ENCODE measurements at regions of chr6 and their contacts with region 1.

Region 1: GRCh38 chr6:134174672-134175198 is 122.3 kb upstream of the SLC2A12 start:
- DNase-seq: peak; percentile 86
- ATAC-seq: peak; percentile 72
- H3K4me3 ChIP-seq: peak overlapping the region; percentile 95
- H3K27ac ChIP-seq: peak overlapping the region; percentile 87
- H3K4me1 ChIP-seq: peaks cover 7% of the 10 kb centered on the region; the same call in 1 of the 2 replicates
- H3K27me3 ChIP-seq: no peaks in the 10 kb centered on the region
- CTCF ChIP-seq: no peak

Region 2: GRCh38 chr6:134105924-134106323 is 68.8 kb before region 1 on chr6:
- CTCF ChIA-PET with region 1: no interaction called
- POLR2A ChIA-PET with region 1: no interaction called
- intact Hi-C with region 1: no loop called
- DNase-seq: no peak
- ATAC-seq: no peak
- H3K4me3 ChIP-seq: no peak overlapping the region
- H3K27ac ChIP-seq: no peak overlapping the region
- H3K4me1 ChIP-seq: peaks cover 14% of the 10 kb centered on the region
- H3K27me3 ChIP-seq: no peaks in the 10 kb centered on the region
- CTCF ChIP-seq: no peak

Region 3: DNA sequence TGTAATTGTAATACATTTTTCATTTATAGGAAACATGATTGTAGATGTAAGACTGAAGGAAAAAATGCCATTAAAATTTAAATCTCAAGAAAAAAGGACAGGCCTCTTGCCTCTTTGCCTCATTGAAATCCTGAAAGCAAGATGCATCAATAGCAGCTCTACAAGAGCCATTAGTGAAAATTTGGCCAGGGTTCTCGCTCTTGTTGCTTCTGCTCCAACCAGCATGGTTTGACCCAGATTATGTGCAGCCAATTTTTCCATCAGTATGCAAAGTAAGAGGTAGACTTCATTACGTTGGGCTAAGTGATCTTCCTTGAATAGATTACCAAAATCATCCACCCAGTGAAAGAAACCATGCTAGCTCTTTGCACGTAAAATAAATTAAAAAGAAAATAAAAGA is 36.6 kb after region 1 on chr6:
- CTCF ChIA-PET with region 1: no interaction called
- POLR2A ChIA-PET with region 1: no interaction called
- intact Hi-C with region 1: no loop called
- DNase-seq: no peak
- ATAC-seq: no peak
- H3K4me3 ChIP-seq: no peak overlapping the region
- H3K27ac ChIP-seq: no peak overlapping the region
- H3K4me1 ChIP-seq: no peaks in the 10 kb centered on the region
- H3K27me3 ChIP-seq: no peaks in the 10 kb centered on the region
- CTCF ChIP-seq: no peak

Region 4: DNA sequence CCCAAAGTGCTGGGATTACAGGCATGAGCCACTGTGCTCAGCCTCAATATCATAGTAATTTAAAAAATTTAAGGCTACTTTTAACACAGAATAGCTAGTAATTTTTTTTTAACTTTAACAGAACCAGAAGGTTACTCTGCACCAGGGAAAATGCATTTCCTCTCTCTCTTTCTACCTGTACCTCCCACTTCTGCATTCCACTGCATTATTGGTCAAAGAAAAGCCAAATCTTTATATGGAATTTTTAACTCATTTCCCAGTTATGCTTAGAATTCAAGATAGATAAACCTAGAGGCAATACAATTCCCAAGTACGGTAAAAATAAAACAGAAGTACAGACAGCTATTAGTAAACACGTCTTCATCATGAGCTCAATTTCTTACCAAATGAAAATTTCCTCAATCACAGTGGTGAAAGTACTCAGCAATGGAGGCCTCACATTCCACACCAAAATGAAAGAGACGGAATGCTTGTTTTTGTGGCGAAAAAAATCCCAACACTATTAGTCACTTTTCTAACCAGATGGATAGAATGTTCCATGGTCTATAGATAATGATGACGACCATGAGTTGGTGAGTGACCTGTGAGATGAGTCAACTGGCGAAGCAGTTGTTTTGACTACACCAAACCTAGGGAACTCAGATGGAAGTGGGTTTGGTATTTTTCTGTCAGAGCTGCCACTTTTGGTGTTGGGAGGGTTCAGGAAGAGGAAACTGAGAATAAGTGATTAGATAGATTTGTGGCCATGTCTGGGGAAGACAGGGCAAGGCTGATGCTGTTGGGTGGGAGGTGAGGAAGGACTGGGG is 247.9 kb after region 1 on chr6:
- CTCF ChIA-PET with region 1: no interaction called
- POLR2A ChIA-PET with region 1: interaction called, 6 read pairs
- intact Hi-C with region 1: loop called (anchors 5 kb)
- DNase-seq: peak; percentile 87
- ATAC-seq: peak; percentile 54
- H3K4me3 ChIP-seq: 0 out of 2 replicates have a peak overlapping the region, but pooled peaks have one; percentile 25
- H3K27ac ChIP-seq: peak overlapping the region; percentile 86
- H3K4me1 ChIP-seq: peaks cover 56% of the 10 kb centered on the region
- H3K27me3 ChIP-seq: no peaks in the 10 kb centered on the region
- CTCF ChIP-seq: no peak

Region 5: GRCh38 chr6:134537146-134537555 is 362.4 kb after region 1 on chr6:
- CTCF ChIA-PET with region 1: interaction called, 3 read pairs
- POLR2A ChIA-PET with region 1: no interaction called
- intact Hi-C with region 1: loop called (anchors 2 kb)
- DNase-seq: peak; percentile 93
- ATAC-seq: peak; percentile 97
- H3K4me3 ChIP-seq: no peak overlapping the region
- H3K27ac ChIP-seq: peak overlapping the region; percentile 93
- H3K4me1 ChIP-seq: peaks cover 19% of the 10 kb centered on the region
- H3K27me3 ChIP-seq: no peaks in the 10 kb centered on the region
- CTCF ChIP-seq: 0 out of 2 replicates have a peak, but pooled peaks have one; percentile 37

Region 6: DNA sequence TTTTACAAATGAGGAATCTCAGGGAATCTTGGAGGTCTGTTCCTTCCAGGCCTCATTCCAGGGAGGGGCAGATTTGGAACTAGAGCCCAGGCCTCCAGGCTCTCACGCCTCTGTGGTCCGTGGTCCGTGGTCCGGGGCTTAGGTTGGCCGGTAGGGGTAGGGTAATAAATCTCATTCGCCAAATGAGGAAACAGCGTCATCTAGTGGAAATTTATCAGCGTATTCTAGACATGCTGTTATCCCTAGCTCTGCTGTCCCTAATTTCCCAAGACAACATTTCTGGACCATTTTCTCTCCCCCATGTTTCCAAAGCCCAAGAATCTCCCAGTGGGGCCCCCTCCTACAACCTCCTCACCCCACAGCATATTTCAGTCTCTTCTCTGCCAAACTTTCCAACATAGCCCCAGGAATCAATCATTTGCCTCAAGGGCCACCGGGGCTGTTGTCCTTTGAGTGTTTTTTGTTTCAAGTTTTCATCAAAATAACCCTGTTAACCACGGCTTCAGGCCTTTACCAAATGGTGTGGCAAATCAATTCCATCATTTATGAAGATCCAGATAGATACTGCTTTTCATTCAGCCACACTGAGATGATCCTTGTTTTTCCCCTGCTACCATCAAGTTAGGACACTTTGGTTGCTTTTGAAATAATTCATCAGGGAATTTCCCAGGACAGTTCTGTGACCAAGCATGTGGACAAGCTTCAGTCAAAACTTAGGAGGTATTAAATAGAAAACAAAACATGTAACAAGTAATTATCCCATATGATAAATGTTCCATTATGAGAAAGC is 648.4 kb after region 1 on chr6:
- CTCF ChIA-PET with region 1: no interaction called
- POLR2A ChIA-PET with region 1: no interaction called
- intact Hi-C with region 1: loop called (anchors 1 kb)
- DNase-seq: peak; percentile 88
- ATAC-seq: peak; percentile 95
- H3K4me3 ChIP-seq: no peak overlapping the region
- H3K27ac ChIP-seq: no peak overlapping the region
- H3K4me1 ChIP-seq: no peaks in the 10 kb centered on the region; the same call in 1 of the 2 replicates
- H3K27me3 ChIP-seq: no peaks in the 10 kb centered on the region
- CTCF ChIP-seq: peak; percentile 79

Region 7: DNA sequence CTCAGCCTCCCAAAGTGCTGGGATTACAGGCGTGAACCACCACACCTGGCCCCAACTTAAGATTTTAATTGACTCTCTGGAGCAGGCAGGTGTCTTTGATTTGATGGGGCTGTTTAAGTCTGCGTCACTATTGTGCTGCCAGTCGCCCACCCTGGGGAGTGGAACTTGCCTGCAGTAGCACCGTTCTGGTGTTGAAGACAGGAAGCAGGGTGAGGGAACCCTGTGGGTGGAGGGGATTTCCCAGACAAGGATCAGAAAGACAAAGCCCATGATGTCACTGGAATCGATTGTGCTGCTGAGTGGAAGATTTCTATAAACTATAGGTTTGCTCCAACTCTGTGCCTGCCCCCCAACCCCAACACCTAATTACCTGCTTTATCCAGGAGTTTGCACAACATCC is 764.2 kb after region 1 on chr6:
- CTCF ChIA-PET with region 1: interaction called, 3 read pairs
- POLR2A ChIA-PET with region 1: no interaction called
- intact Hi-C with region 1: loop called (anchors 5 kb)
- DNase-seq: no peak
- ATAC-seq: no peak
- H3K4me3 ChIP-seq: no peak overlapping the region
- H3K27ac ChIP-seq: no peak overlapping the region
- H3K4me1 ChIP-seq: peaks cover 8% of the 10 kb centered on the region
- H3K27me3 ChIP-seq: no peaks in the 10 kb centered on the region
- CTCF ChIP-seq: no peak